Spleen (tissue), 13 donors: ENCODE measurements at regions of chr17 and their contacts with region 1.

Region 1: GRCh38 chr17:73196500-73196899 is 3.6 kb downstream of the COG1 start:
- DNase-seq: no peak
- H3K4me3 ChIP-seq: no peak overlapping the region
- H3K27ac ChIP-seq: no peak overlapping the region
- H3K4me1 ChIP-seq: peaks cover 17 to 55% (median 40%) of the 10 kb centered on the region in 6 donors
- H3K27me3 ChIP-seq: no peaks in the 10 kb centered on the region
- CTCF ChIP-seq: peak in 6 of 11 experiments; percentile 11 to 28 (median 16)
- POLR2A ChIP-seq: no peak

Region 2: DNA sequence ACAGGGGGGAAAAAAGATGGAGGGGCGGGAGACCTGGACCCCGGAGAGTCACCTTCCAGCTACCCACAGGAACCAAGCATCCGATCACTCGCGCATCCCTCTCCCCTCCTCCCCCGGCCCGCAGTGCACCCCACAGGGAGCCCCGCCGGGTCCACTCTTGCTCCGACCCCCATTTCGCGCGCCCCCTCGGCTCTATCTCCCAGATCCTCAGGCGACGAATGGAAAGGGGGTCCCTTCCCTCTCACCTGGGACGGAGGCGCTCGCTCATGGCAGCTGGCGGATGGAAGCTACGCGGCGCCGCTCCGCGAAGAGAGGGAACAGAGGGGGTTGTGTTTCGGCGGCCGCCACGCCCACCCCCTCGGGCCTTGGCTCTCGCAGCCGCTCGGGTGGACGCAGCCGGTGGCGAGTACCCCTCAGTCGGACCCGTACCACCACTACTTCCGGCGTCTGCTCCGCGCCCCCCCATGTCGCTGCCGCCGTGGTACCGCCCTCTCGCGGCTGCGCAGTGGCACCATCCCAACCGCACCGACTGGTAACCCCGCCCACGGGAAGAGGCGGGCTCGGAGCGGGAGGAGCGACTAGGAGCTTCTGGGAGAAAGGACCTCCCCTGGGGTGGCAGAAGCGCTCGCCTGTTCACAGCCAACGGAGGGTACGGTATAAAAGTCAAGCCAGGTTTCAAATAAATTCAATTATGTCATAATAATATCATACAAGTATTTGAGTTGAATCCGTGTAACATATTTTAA is 35.5 kb after region 1 on chr17:
- intact Hi-C with region 1: loop called (anchors 5 kb)
- DNase-seq: peak; percentile 99
- H3K4me3 ChIP-seq: peak overlapping the region; percentile 80 to 99 (median 92)
- H3K27ac ChIP-seq: peak overlapping the region; percentile 73 to 92 (median 88)
- H3K4me1 ChIP-seq: peaks cover 33 to 81% (median 59%) of the 10 kb centered on the region in 6 donors
- H3K27me3 ChIP-seq: no peaks in the 10 kb centered on the region
- CTCF ChIP-seq: peak in 10 of 11 experiments; percentile 4 to 71 (median 47)
- POLR2A ChIP-seq: peak in 1 of 3 donors; percentile 17